ENCODE measurements at regions of chr16 and their contacts with region 1.

Region 1: DNA sequence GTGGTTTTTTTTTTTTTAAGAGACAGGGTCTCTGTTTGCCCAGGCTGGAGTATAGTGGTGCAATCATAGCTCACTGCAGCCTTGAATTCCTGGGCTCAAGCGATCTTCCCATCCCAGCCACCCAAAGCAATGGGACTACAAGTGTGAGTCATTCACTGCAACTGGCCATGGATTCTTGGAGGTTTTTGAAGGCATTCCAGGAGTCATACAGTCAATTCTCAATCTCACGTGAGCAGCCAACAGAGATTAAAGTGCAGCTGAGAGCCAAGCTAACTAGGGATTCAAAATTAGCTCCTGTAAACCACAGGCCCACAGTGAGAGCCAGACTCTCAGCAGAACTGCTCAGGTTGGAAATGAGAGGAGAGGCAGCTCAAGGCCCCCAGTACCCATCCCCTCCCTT is 30.2 kb downstream of the XPO6 start:
- DNase-seq: peak in 1 of 3 donors; percentile 56
- H3K4me3 ChIP-seq: peak overlapping the region in 1 of 3 experiments; percentile 54
- H3K4me3 Mint-ChIP-seq: no peak overlapping the region
- H3K27ac ChIP-seq: peak overlapping the region; percentile 70 to 87
- H3K27ac Mint-ChIP-seq: peak overlapping the region; percentile 88 to 99 (median 93)
- H3K4me1 ChIP-seq: peaks cover 36 to 51% of the 10 kb centered on the region in 2 donors
- H3K4me1 Mint-ChIP-seq: peaks cover 63% of the 10 kb centered on the region
- H3K27me3 ChIP-seq: no peaks in the 10 kb centered on the region
- H3K27me3 Mint-ChIP-seq: no peaks in the 10 kb centered on the region
- CTCF ChIP-seq: no peak

Region 2: GRCh38 chr16:28151210-28151609 is 30.3 kb before region 1 on chr16:
- intact Hi-C with region 1: no loop called
- DNase-seq: no peak
- H3K4me3 ChIP-seq: no peak overlapping the region
- H3K4me3 Mint-ChIP-seq: no peak overlapping the region
- H3K27ac ChIP-seq: peak overlapping the region in 1 of 2 donors; percentile 38
- H3K27ac Mint-ChIP-seq: peak overlapping the region in 3 of 7 donors; percentile 3 to 43 (median 25)
- H3K4me1 ChIP-seq: peaks cover 4 to 25% of the 10 kb centered on the region in 2 donors
- H3K4me1 Mint-ChIP-seq: peaks cover 20% of the 10 kb centered on the region
- H3K27me3 ChIP-seq: no peaks in the 10 kb centered on the region
- H3K27me3 Mint-ChIP-seq: no peaks in the 10 kb centered on the region
- CTCF ChIP-seq: no peak

Region 3: GRCh38 chr16:28164140-28164539 is 17.4 kb before region 1 on chr16:
- intact Hi-C with region 1: loop called in 1 of 2 experiments (anchors 2 kb)
- DNase-seq: peak; percentile 72 to 84 (median 77)
- H3K4me3 ChIP-seq: peak overlapping the region in 2 of 3 experiments; percentile 16 to 52
- H3K4me3 Mint-ChIP-seq: peak overlapping the region in 1 of 2 donors; percentile 51
- H3K27ac ChIP-seq: peak overlapping the region; percentile 80 to 89
- H3K27ac Mint-ChIP-seq: peak overlapping the region; percentile 85 to 98 (median 95)
- H3K4me1 ChIP-seq: peaks cover 64 to 73% of the 10 kb centered on the region in 2 donors
- H3K4me1 Mint-ChIP-seq: peaks cover 74% of the 10 kb centered on the region
- H3K27me3 ChIP-seq: no peaks in the 10 kb centered on the region
- H3K27me3 Mint-ChIP-seq: peaks cover 0 to 1% (median 0%) of the 10 kb centered on the region in 3 donors
- CTCF ChIP-seq: no peak